Heart right ventricle (tissue), 16 donors: ENCODE measurements at regions of chr9 and their contacts with region 1.

Region 1: GRCh38 chr9:112867416-112867991 is 23.2 kb downstream of the SLC46A2 start:
- DNase-seq: no peak
- ATAC-seq: peak in 2 of 8 donors; percentile 27 to 68
- H3K4me3 ChIP-seq: no peak overlapping the region
- H3K27ac ChIP-seq: peak overlapping the region in 1 of 10 donors; percentile 68
- H3K4me1 ChIP-seq: peaks cover 0 to 31% (median 0%) of the 10 kb centered on the region in 9 donors
- H3K27me3 ChIP-seq: no peaks in the 10 kb centered on the region
- CTCF ChIP-seq: no peak

Region 2: GRCh38 chr9:112725961-112726360 is 141.5 kb before region 1 on chr9:
- intact Hi-C with region 1: no loop called
- DNase-seq: no peak
- ATAC-seq: no peak
- H3K4me3 ChIP-seq: no peak overlapping the region
- H3K27ac ChIP-seq: peak overlapping the region in 1 of 10 donors; percentile 86
- H3K4me1 ChIP-seq: peaks cover 0 to 24% (median 0%) of the 10 kb centered on the region in 9 donors
- H3K27me3 ChIP-seq: no peaks in the 10 kb centered on the region
- CTCF ChIP-seq: no peak

Region 3: DNA sequence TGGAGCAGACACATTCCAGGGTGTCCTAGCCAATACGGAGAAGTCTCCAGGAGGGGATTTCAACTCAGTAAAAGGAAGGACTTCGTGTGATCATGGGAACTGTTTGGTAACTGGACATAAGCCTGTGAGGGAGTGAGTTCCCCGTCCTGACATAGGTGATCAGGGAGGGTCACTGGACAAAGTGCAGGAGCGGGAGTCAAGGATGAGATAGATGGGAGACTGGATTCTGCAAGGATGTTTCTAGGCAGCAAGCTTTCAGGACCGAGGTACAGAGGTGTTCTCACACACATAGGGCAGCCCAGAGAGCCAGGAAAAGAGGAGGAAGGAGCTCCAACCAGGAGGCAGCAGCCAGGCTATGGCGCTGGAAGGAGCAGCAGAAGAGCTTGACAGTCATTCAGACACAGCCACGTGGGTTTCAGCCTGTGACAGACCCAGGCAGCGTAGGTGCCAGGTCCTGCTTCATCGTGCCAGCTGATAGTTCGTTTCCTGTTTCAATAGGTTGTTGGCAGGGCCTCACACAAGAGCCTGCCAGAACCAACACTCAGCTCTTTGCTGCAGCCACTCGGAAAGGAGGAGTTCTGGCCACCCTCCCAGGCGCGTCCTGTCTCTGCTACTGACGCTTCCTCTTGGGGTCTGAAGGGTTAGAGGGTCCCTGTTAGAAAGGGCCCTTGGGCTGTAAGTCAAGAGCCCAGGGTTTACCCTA is 1126.5 kb after region 1 on chr9:
- intact Hi-C with region 1: loop called in 1 of 10 experiments (anchors 10 kb)
- DNase-seq: peak; percentile 86 to 89
- ATAC-seq: peak; percentile 81 to 95 (median 90)
- H3K4me3 ChIP-seq: no peak overlapping the region
- H3K27ac ChIP-seq: peak overlapping the region in 4 of 10 donors; percentile 8 to 48 (median 38)
- H3K4me1 ChIP-seq: peaks cover 21 to 65% (median 42%) of the 10 kb centered on the region in 9 donors
- H3K27me3 ChIP-seq: no peaks in the 10 kb centered on the region
- CTCF ChIP-seq: no peak